Activated naive CD4-positive, alpha-beta T cell treated with anti-CD3 and anti-CD28 coated beads for 36 hours (primary cell): ENCODE measurements at regions of chr18 and their contacts with region 1.

Region 1: DNA sequence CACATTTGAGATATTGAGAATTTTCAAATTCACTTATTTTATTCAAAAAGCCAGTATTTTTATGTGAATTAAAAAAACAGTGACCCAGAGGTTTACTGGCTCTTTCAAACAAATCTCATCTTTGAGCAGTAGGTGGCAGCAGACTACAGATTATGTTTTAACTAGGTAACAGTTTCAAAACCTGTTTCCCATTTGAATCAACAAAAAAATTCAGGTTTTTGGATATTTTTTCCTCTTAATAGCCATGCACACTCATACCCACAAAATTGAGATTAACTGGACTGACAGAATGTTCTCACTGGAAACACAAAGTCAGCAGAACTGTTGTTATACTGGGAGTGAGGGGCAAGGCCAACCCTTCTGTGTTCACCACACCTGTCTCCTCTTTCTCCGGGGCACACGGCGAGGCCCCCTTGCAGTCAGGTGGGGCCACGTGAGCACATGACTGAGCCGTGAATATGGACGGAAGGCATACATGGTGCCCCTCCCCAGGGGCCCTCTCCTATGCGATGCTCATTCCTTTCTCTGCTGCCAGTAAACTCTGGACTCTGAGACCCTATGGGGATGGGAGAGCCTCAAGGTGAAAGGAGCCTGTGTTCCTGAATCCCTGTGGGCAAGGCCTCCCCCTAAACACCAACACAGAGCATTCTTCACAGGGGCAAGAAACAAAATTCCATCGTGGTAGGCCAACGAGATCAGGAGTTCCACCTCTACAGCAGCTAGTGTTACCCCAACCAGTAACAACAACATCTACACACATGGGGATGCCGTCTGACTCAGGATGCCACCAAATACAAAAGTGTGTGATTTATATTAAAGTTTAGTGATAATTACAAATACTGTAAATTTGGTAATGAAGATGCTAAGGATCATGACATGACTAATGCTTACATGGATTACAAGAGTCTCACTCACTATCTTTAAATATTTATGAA is 80.4 kb downstream of the LPIN2 start:
- DNase-seq: peak; percentile 68
- H3K4me3 Mint-ChIP-seq: no peak overlapping the region
- H3K27ac Mint-ChIP-seq: peak overlapping the region; percentile 94
- H3K4me1 Mint-ChIP-seq: peaks cover 35% of the 10 kb centered on the region
- H3K27me3 Mint-ChIP-seq: no peaks in the 10 kb centered on the region

Region 2: DNA sequence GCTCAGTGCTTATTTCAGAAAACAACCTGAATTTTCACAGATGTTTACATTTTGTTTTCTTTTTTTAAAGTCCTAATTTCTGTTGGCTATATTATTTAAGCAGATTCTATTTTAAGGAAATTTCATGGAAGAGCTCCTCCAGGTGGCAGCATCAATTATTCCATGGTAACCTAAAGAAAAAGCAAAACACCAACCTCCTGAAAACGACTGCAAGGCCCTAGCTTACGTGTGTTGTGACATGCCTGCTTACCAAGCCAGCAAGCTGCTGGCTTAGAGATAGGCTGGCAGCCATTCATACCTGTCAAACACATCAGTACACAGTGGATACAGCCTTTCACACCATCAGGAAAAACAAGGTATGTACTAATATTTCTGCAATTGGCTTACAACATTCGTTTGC is 15.5 kb after region 1 on chr18:
- CTCF ChIA-PET with region 1: interaction called, 15 read pairs
- intact Hi-C with region 1: no loop called
- DNase-seq: no peak
- H3K4me3 Mint-ChIP-seq: no peak overlapping the region
- H3K27ac Mint-ChIP-seq: no peak overlapping the region
- H3K4me1 Mint-ChIP-seq: peaks cover 43% of the 10 kb centered on the region
- H3K27me3 Mint-ChIP-seq: no peaks in the 10 kb centered on the region

Region 3: DNA sequence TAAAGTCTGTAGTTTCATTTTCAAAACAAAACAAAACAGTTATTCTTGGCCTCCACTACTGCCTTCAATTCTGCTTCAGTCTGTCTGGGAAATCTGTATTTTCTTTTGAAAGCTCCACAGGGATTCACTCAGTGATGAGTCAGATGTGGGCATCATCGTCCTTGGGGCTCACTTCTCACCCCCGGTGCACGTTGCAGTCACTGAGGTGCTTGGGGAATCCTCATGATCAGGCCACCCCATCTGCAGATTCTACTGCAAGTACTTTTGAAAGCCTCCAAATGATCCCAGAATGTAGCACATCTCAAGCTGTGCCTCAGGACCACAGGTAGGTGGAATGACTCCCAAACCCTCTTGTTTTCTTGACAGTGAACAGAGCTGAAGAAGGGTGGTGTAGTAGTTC is 46.1 kb after region 1 on chr18:
- CTCF ChIA-PET with region 1: interaction called, 7 read pairs
- intact Hi-C with region 1: loop called (anchors 1 kb)
- DNase-seq: peak; percentile 66
- H3K4me3 Mint-ChIP-seq: peak overlapping the region; percentile 54
- H3K27ac Mint-ChIP-seq: peak overlapping the region; percentile 92
- H3K4me1 Mint-ChIP-seq: peaks cover 91% of the 10 kb centered on the region
- H3K27me3 Mint-ChIP-seq: no peaks in the 10 kb centered on the region

Region 4: DNA sequence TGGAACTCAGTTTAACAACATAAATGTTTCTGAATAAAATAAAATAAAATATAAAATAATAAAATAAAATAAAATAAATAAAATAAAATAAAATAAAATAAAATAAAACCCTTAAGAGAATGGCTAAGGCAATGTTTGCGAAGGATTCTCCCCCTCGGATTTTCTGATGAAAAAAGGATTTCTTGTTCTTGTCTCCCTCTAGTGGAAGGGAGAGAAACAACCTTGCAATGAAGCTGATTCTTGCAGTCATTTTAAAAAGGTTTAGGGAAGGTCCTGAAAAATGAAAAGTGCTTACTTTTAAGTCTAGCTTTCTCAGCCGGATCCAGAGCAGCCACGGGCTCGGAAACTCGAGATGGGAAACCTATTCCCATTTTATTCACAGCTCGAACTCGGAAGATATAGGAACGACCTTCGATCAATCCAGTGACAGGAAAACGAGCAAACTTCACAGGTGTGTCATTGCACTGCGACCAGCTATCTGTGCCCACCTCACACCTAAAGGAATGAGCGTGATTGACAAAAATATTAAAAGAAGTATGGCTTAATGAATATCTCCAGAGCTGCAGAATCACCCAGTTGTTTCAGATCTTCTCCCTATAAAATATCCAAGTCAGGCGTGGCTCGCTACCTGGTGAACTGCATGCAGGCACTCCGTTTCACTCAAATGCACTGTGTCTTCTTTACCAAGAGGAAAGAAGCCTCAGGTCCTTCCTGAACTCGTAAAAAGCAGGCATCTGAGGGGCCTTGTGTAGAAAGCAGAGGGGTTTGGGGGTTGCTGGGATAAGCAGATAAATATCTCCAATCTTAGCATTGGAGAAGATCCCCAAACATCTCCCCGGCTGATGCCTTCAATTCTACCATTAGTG is 219.1 kb after region 1 on chr18:
- CTCF ChIA-PET with region 1: interaction called, 16 read pairs
- intact Hi-C with region 1: loop called (anchors 1 kb)
- DNase-seq: no peak
- H3K4me3 Mint-ChIP-seq: no peak overlapping the region
- H3K27ac Mint-ChIP-seq: no peak overlapping the region
- H3K4me1 Mint-ChIP-seq: peaks cover 6% of the 10 kb centered on the region
- H3K27me3 Mint-ChIP-seq: no peaks in the 10 kb centered on the region